BJ (cell line): ENCODE measurements at regions of chr3 and their contacts with region 1.

Region 1: DNA sequence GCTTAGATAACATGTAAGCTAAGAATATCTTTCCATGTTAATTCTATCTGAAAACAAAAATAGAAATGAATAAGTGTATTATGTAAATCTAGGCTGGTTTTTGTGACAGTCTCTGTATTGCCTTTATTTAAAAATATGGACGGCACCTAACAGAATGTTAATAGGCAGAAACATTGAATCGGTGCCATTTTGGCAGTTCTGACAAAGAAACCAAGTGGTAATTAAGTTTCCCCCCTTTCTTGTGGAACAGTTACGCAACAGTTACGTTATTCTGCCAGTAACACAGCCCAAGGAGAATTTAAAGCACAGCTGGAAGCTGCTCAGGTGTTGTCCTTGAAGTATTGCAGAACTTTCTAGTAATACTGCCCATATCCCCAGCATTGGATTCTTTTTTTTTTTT is 21.5 kb downstream of the LARS2 start:
- DNase-seq: no peak
- H3K4me3 ChIP-seq: no peak overlapping the region
- H3K27me3 ChIP-seq: no peaks in the 10 kb centered on the region
- CTCF ChIP-seq: no peak

Region 2: GRCh38 chr3:44865272-44866035 is 544.5 kb before region 1 on chr3:
- CTCF ChIA-PET with region 1: no interaction called
- POLR2A ChIA-PET with region 1: no interaction called
- DNase-seq: no peak
- H3K4me3 ChIP-seq: no peak overlapping the region
- H3K27me3 ChIP-seq: no peaks in the 10 kb centered on the region
- CTCF ChIP-seq: no peak

Region 3: GRCh38 chr3:45437383-45437782 is 27.5 kb after region 1 on chr3:
- CTCF ChIA-PET with region 1: no interaction called
- POLR2A ChIA-PET with region 1: interaction called, 12 read pairs
- DNase-seq: no peak
- H3K4me3 ChIP-seq: no peak overlapping the region
- H3K27me3 ChIP-seq: no peaks in the 10 kb centered on the region
- CTCF ChIP-seq: no peak